ENCODE measurements at regions of chr11 and their contacts with region 1.

Region 1: GRCh38 chr11:67332081-67332691 is 21.2 kb downstream of the POLD4 start:
- DNase-seq: no peak
- ATAC-seq: no peak
- H3K4me3 Mint-ChIP-seq: no peak overlapping the region
- H3K27ac Mint-ChIP-seq: no peak overlapping the region
- H3K4me1 Mint-ChIP-seq: no peaks in the 10 kb centered on the region
- H3K27me3 Mint-ChIP-seq: no peaks in the 10 kb centered on the region
- CTCF ChIP-seq: no peak

Region 2: DNA sequence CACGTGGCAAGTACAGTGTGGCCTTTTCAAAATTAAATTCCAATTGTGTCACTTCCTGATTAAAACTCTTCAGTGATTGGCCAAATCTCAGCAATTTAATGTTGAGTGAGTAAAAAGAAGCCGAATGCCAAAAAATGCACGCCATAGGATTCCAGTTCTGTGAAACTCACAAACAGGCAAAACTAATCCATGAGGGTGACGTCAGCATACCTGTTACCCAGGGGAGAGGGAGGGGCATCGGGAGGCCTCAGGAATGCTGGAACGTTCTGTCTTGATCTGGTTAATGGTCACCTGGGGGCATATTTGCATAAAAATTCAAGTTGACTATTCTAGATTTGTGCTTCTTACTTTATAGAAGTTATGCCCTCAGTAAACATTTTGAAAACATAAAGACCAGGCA is 1103.7 kb before region 1 on chr11:
- CTCF ChIA-PET with region 1: no interaction called
- POLR2A ChIA-PET with region 1: no interaction called
- intact Hi-C with region 1: no loop called
- DNase-seq: no peak
- ATAC-seq: no peak
- H3K4me3 Mint-ChIP-seq: no peak overlapping the region
- H3K27ac Mint-ChIP-seq: no peak overlapping the region
- H3K4me1 Mint-ChIP-seq: no peaks in the 10 kb centered on the region
- H3K27me3 Mint-ChIP-seq: no peaks in the 10 kb centered on the region
- CTCF ChIP-seq: no peak

Region 3: GRCh38 chr11:67345920-67346799 is 14.0 kb after region 1 on chr11:
- CTCF ChIA-PET with region 1: interaction called, 4 read pairs
- POLR2A ChIA-PET with region 1: interaction called, 14 read pairs
- intact Hi-C with region 1: no loop called
- DNase-seq: no peak
- ATAC-seq: peak; percentile 46
- H3K4me3 Mint-ChIP-seq: no peak overlapping the region
- H3K27ac Mint-ChIP-seq: peak overlapping the region; percentile 88
- H3K4me1 Mint-ChIP-seq: peaks cover 71% of the 10 kb centered on the region
- H3K27me3 Mint-ChIP-seq: no peaks in the 10 kb centered on the region
- CTCF ChIP-seq: no peak

Region 4: DNA sequence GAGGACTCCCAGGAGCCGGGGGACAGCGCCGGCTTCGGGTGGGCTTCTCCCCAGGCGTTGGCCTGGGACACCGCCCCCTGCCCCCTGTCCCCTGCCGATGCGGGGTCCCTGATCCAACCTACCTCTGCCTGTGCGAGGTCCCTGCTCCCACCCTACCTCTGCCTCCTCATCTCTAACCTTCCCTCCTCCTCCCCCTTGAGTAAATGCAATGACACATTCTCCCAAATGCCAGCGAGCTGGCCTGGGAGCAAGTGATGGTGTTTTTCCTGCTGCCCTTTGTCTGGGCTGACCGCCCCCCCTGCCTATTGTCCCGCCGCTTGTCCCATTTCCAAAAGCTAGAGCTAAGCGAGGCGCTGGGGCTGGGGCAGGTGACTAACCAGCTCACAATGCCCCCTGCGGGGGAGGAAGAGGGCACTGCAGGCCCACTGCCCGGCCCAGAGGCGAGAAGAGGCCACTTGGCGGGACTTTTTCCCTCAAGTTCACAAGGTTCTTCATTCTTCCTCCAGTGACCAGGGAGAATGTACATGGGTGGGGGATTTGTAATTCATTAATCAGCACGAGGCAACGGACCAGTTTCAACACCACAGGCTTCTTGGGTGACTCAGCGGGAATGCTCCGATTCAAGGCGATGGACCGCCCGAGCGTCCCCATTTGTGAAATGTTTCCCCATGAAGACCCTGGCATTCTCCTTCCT is 41.9 kb after region 1 on chr11:
- CTCF ChIA-PET with region 1: no interaction called
- POLR2A ChIA-PET with region 1: no interaction called
- intact Hi-C with region 1: no loop called
- DNase-seq: peak; percentile 63
- ATAC-seq: peak; percentile 47
- H3K4me3 Mint-ChIP-seq: peak overlapping the region; percentile 87
- H3K27ac Mint-ChIP-seq: peak overlapping the region; percentile 79
- H3K4me1 Mint-ChIP-seq: peaks cover 57% of the 10 kb centered on the region
- H3K27me3 Mint-ChIP-seq: no peaks in the 10 kb centered on the region
- CTCF ChIP-seq: no peak